ENCODE measurements at regions of chr5 and their contacts with region 1.

Region 1: DNA sequence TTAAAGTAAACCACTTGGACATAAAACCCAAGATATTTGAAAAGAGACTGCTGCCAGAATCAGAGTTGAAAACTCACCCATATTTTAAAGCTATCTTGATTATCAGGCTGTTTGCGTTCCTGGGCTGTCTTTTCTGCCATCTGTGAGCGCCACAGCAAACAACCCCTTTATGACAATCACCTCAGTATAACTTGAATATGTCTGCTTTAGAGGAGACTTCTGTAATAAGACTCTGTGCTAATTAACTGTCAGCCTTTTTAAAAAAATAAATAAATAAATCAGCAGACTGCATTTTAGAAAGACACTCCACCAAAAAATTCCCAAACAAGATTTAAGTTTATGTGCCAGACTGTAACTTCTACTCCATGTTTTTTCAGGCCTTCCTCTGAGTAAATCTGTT is 375.7 kb upstream of the CCNH start:
- DNase-seq: no peak
- ATAC-seq: no peak
- H3K4me3 ChIP-seq: no peak overlapping the region
- H3K4me3 Mint-ChIP-seq: no peak overlapping the region
- H3K27ac ChIP-seq: no peak overlapping the region
- H3K27ac Mint-ChIP-seq: no peak overlapping the region
- H3K4me1 ChIP-seq: no peaks in the 10 kb centered on the region
- H3K4me1 Mint-ChIP-seq: no peaks in the 10 kb centered on the region
- H3K27me3 ChIP-seq: peaks cover 0 to 3% of the 10 kb centered on the region in 2 experiments
- H3K27me3 Mint-ChIP-seq: peaks cover 9% of the 10 kb centered on the region
- CTCF ChIP-seq: no peak

Region 2: GRCh38 chr5:87762631-87763030 is 25.8 kb before region 1 on chr5:
- CTCF ChIA-PET with region 1: no interaction called
- POLR2A ChIA-PET with region 1: no interaction called
- intact Hi-C with region 1: loop called in 1 of 2 experiments (anchors 1 kb)
- DNase-seq: no peak
- ATAC-seq: no peak
- H3K4me3 ChIP-seq: no peak overlapping the region
- H3K4me3 Mint-ChIP-seq: no peak overlapping the region
- H3K27ac ChIP-seq: no peak overlapping the region
- H3K27ac Mint-ChIP-seq: no peak overlapping the region
- H3K4me1 ChIP-seq: no peaks in the 10 kb centered on the region
- H3K4me1 Mint-ChIP-seq: no peaks in the 10 kb centered on the region
- H3K27me3 ChIP-seq: no peaks in the 10 kb centered on the region
- H3K27me3 Mint-ChIP-seq: peaks cover 21% of the 10 kb centered on the region
- CTCF ChIP-seq: no peak

Region 3: DNA sequence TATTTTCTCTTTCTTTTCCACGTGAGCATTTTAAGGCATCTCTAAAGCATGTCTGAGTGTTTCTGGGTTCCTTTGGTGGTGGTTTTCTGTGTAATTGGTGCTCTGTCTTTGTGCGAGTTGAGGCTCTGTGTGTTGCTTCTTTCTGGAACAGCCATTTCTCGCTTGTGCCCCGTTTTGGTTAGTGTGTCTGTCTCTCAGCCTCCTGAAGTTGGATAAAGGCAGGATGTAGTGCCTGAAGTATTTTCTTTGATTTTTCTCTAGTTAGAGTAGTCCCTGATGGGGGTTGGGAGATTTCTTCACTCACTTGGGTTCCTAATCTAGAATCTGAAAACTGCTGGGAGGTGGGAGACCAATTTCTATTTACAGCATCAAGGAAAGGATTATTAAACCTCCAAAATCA is 609.9 kb after region 1 on chr5:
- CTCF ChIA-PET with region 1: no interaction called
- POLR2A ChIA-PET with region 1: no interaction called
- intact Hi-C with region 1: no loop called
- DNase-seq: no peak
- ATAC-seq: no peak
- H3K4me3 ChIP-seq: no peak overlapping the region
- H3K4me3 Mint-ChIP-seq: no peak overlapping the region
- H3K27ac ChIP-seq: no peak overlapping the region
- H3K27ac Mint-ChIP-seq: no peak overlapping the region
- H3K4me1 ChIP-seq: no peaks in the 10 kb centered on the region
- H3K4me1 Mint-ChIP-seq: peaks cover 2% of the 10 kb centered on the region
- H3K27me3 ChIP-seq: peaks cover 0 to 6% of the 10 kb centered on the region in 2 experiments
- H3K27me3 Mint-ChIP-seq: peaks cover 18% of the 10 kb centered on the region
- CTCF ChIP-seq: no peak